HCT116 (cell line): ENCODE measurements at regions of chr19 and their contacts with region 1.

Region 1: DNA sequence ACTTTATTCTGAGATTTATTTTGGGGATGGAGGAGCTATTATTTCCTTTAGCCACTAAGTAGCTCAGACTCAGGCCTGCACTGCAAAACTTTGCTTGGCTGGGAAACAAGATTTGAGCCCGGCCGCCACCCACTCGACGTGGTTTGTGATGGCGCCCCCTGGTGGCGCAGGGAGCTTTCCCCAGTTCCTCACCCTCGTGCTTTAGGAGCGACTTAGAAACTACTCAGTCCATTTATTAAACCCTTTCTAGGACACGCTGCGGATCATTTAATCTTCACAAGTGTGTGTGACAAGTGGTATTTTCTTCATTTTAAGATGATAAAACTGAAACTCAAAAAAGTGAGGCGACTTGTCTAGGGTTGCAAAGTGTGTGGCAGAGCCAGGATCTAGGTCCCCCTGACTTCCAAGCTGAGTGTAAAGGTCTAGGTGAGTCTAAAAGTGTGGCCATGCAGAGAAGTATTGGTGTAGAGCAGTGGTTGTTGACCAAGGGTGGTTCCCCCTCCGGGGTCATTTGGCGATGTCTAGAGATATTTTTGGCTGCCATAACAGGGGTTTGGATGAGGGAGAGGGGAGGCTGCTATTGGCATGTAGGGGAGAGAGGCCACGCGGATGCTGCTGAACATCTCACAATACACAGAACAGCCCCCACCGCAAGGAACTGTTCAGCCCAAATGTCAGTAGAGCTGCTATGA is 2.2 kb downstream of the CXCL17 start:
- DNase-seq: peak; percentile 42
- ATAC-seq: peak; percentile 78
- H3K4me3 ChIP-seq: no peak overlapping the region
- H3K27ac ChIP-seq: no peak overlapping the region
- H3K4me1 ChIP-seq: peaks cover 0 to 10% of the 10 kb centered on the region in 2 experiments; a peak in 2 of 4 replicates
- H3K27me3 ChIP-seq: no peaks in the 10 kb centered on the region
- CTCF ChIP-seq: peak; percentile 79 to 99 (median 95); a peak in 5 of 6 replicates
- POLR2A ChIP-seq: no peak
- RAD21 ChIP-seq: peak; percentile 49

Region 2: GRCh38 chr19:42113641-42114348 is 326.7 kb before region 1 on chr19:
- CTCF ChIA-PET with region 1: interaction called, 11 read pairs
- POLR2A ChIA-PET with region 1: no interaction called
- RAD21 ChIA-PET with region 1: no interaction called
- intact Hi-C with region 1: loop called (anchors 5 kb)
- DNase-seq: peak; percentile 64
- ATAC-seq: peak; percentile 91
- H3K4me3 ChIP-seq: peak overlapping the region; percentile 10 to 15; a peak in 2 of 4 replicates
- H3K27ac ChIP-seq: peak overlapping the region; percentile 40
- H3K4me1 ChIP-seq: peaks cover 24 to 34% of the 10 kb centered on the region in 2 experiments
- H3K27me3 ChIP-seq: no peaks in the 10 kb centered on the region
- CTCF ChIP-seq: peak in 2 of 3 experiments; percentile 71 to 74; a peak in 4 of 6 replicates
- POLR2A ChIP-seq: no peak
- RAD21 ChIP-seq: peak; percentile 14; the same call in 1 of the 2 replicates

Region 3: DNA sequence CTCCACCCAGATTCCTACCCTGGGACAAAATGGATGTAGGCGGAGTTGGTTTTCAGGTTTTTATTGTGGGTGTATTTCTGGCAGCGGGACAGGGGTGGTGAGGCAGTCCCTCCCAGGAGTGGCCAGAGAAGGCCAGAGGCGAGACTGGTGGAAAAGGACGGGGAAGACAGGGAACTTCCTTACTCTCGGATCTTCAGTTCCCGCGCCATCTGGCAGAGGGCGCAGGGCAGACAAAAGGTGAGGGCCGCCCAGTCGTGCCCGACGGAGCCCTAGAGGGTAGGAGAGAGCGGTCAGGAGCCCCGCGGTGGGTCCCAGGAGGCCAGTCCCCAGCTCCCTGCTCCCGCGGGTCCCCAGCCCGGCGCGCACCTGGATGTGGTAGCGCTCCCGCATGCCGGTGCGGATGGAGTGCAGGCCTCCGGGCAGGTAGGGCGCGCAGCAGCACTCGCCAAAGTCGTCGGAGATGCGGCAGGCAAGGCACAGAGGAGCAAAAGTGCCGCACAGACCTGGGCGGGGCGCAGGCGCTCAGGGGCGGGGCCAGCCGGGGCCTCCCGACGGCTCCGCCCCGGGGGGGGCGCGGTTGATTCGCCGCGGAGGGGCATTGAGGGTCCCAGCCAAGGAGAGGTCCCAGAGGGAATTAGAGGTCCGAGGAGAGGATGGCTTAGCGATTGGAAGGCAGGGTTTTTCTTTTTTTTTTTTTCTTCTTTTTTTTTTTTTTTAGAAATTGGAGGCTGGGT is 53.4 kb before region 1 on chr19:
- CTCF ChIA-PET with region 1: no interaction called
- POLR2A ChIA-PET with region 1: no interaction called
- RAD21 ChIA-PET with region 1: no interaction called
- intact Hi-C with region 1: no loop called
- DNase-seq: peak; percentile 73
- ATAC-seq: peak; percentile 93
- H3K4me3 ChIP-seq: peak overlapping the region; percentile 62 to 70
- H3K27ac ChIP-seq: peak overlapping the region; percentile 82
- H3K4me1 ChIP-seq: peaks cover 6 to 21% of the 10 kb centered on the region in 2 experiments
- H3K27me3 ChIP-seq: no peaks in the 10 kb centered on the region
- CTCF ChIP-seq: peak; percentile 51 to 74 (median 59); a peak in 5 of 6 replicates
- POLR2A ChIP-seq: peak; percentile 41
- RAD21 ChIP-seq: no peak

Region 4: GRCh38 chr19:42409477-42409876 is 31.0 kb before region 1 on chr19:
- CTCF ChIA-PET with region 1: no interaction called
- POLR2A ChIA-PET with region 1: no interaction called
- RAD21 ChIA-PET with region 1: no interaction called
- intact Hi-C with region 1: no loop called
- DNase-seq: no peak
- ATAC-seq: 0 out of 2 replicates have a peak, but pooled peaks have one; percentile 12
- H3K4me3 ChIP-seq: no peak overlapping the region
- H3K27ac ChIP-seq: no peak overlapping the region
- H3K4me1 ChIP-seq: peaks cover 14 to 21% of the 10 kb centered on the region in 2 experiments
- H3K27me3 ChIP-seq: no peaks in the 10 kb centered on the region
- CTCF ChIP-seq: no peak
- POLR2A ChIP-seq: no peak
- RAD21 ChIP-seq: no peak

Region 5: GRCh38 chr19:42423462-42424344 is 16.8 kb before region 1 on chr19:
- CTCF ChIA-PET with region 1: interaction called, 22 read pairs
- POLR2A ChIA-PET with region 1: no interaction called
- RAD21 ChIA-PET with region 1: no interaction called
- intact Hi-C with region 1: no loop called
- DNase-seq: peak; percentile 84
- ATAC-seq: peak; percentile 96
- H3K4me3 ChIP-seq: peak overlapping the region; percentile 71 to 73
- H3K27ac ChIP-seq: peak overlapping the region; percentile 50
- H3K4me1 ChIP-seq: peaks cover 21 to 45% of the 10 kb centered on the region in 2 experiments; a peak in 3 of 4 replicates
- H3K27me3 ChIP-seq: no peaks in the 10 kb centered on the region
- CTCF ChIP-seq: no peak
- POLR2A ChIP-seq: no peak
- RAD21 ChIP-seq: no peak

Region 6: DNA sequence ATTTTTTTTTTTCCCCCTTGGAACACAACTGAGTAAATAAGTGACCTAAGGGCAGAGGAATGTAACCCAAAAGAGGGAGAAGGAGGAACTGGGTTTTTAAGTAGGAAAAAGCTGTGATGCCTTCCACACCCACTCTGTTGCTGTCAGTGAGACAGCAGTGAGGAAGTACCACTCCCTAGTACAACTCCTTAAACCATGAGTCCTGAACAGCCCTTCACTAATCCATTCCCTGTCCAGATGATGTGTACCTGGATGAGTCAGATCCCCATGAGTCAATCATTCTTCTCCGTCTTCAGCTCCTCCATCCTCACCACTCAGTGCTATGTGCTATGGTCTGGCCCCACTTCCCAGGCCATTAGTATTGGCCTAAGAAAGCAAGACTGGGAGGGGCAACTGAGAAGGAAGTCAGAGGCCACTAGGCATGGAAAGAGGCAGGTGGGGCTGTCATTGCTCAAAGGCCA is 15.1 kb after region 1 on chr19:
- CTCF ChIA-PET with region 1: interaction called, 29 read pairs
- POLR2A ChIA-PET with region 1: interaction called, 3 read pairs
- RAD21 ChIA-PET with region 1: no interaction called
- intact Hi-C with region 1: no loop called
- DNase-seq: peak; percentile 76
- ATAC-seq: peak; percentile 97
- H3K4me3 ChIP-seq: no peak overlapping the region
- H3K27ac ChIP-seq: no peak overlapping the region; the same call in 1 of the 2 replicates
- H3K4me1 ChIP-seq: peaks cover 9 to 15% of the 10 kb centered on the region in 2 experiments
- H3K27me3 ChIP-seq: no peaks in the 10 kb centered on the region
- CTCF ChIP-seq: no peak
- POLR2A ChIP-seq: no peak
- RAD21 ChIP-seq: peak; percentile 17; the same call in 1 of the 2 replicates

Region 7: GRCh38 chr19:42577016-42577415 is 136.5 kb after region 1 on chr19:
- CTCF ChIA-PET with region 1: no interaction called
- POLR2A ChIA-PET with region 1: no interaction called
- RAD21 ChIA-PET with region 1: no interaction called
- intact Hi-C with region 1: no loop called
- DNase-seq: no peak
- ATAC-seq: no peak
- H3K4me3 ChIP-seq: no peak overlapping the region
- H3K27ac ChIP-seq: no peak overlapping the region
- H3K4me1 ChIP-seq: no peaks in the 10 kb centered on the region
- H3K27me3 ChIP-seq: peaks cover 15% of the 10 kb centered on the region
- CTCF ChIP-seq: no peak
- POLR2A ChIP-seq: no peak
- RAD21 ChIP-seq: no peak